ENCODE measurements at regions of chr15 and their contacts with region 1.

Region 1: DNA sequence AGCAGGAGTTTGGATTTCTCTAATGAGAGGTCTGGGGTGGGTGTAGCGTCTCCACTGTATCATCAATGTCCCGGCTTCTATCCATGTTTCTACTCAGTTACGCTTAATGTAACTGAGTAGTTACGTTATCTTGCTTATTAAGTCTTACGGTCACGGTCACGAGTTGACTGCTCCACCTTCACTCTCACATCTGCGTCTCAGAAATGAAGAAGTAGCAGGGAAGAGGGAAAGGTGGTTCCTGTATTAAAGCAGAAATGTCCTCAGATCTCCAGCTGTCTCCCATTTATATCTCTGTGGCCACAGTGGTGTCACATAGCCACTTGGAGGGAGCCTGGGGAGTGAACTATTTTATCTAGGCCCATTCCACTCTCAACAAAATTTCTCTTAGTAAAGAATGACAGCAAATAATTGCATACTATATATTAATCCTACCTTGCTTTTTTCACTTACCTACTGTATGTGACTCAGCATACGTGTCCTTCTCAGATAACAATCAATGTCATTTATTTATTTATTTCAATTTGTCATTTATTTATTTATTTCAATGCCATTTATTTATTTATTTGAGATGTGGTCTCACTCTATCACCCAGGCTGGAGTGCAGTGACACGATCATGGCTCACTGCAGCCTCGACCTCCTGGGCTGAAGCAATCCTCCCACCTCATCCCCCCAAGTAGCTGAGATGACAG is 39.7 kb upstream of the RNU6-1 start:
- DNase-seq: no peak
- H3K4me3 ChIP-seq: no peak overlapping the region
- H3K27ac ChIP-seq: no peak overlapping the region
- H3K4me1 ChIP-seq: peaks cover 5 to 24% of the 10 kb centered on the region in 2 donors
- H3K27me3 ChIP-seq: no peaks in the 10 kb centered on the region
- CTCF ChIP-seq: no peak
- POLR2A ChIP-seq: no peak

Region 2: GRCh38 chr15:67937153-67937761 is 57.7 kb after region 1 on chr15:
- intact Hi-C with region 1: loop called (anchors 10 kb)
- DNase-seq: peak; percentile 48 to 53
- H3K4me3 ChIP-seq: no peak overlapping the region
- H3K27ac ChIP-seq: peak overlapping the region in 1 of 3 donors; percentile 56
- H3K4me1 ChIP-seq: peaks cover 9 to 30% of the 10 kb centered on the region in 2 donors
- H3K27me3 ChIP-seq: no peaks in the 10 kb centered on the region
- CTCF ChIP-seq: no peak
- POLR2A ChIP-seq: no peak